Naive thymus-derived CD4-positive, alpha-beta T cell (primary cell): ENCODE measurements at regions of chr6 and their contacts with region 1.

Region 1: GRCh38 chr6:11824986-11825385 is 46.4 kb upstream of the ADTRP start:
- DNase-seq: peak in 1 of 9 donors; percentile 29
- ATAC-seq: peak; percentile 47
- H3K4me3 ChIP-seq: no peak overlapping the region
- H3K4me3 Mint-ChIP-seq: no peak overlapping the region
- H3K27ac ChIP-seq: no peak overlapping the region
- H3K27ac Mint-ChIP-seq: peak overlapping the region in 1 of 9 donors; percentile 65
- H3K4me1 ChIP-seq: no peaks in the 10 kb centered on the region
- H3K4me1 Mint-ChIP-seq: peaks cover 2 to 10% (median 7%) of the 10 kb centered on the region in 7 donors
- H3K27me3 ChIP-seq: no peaks in the 10 kb centered on the region
- H3K27me3 Mint-ChIP-seq: no peaks in the 10 kb centered on the region

Region 2: DNA sequence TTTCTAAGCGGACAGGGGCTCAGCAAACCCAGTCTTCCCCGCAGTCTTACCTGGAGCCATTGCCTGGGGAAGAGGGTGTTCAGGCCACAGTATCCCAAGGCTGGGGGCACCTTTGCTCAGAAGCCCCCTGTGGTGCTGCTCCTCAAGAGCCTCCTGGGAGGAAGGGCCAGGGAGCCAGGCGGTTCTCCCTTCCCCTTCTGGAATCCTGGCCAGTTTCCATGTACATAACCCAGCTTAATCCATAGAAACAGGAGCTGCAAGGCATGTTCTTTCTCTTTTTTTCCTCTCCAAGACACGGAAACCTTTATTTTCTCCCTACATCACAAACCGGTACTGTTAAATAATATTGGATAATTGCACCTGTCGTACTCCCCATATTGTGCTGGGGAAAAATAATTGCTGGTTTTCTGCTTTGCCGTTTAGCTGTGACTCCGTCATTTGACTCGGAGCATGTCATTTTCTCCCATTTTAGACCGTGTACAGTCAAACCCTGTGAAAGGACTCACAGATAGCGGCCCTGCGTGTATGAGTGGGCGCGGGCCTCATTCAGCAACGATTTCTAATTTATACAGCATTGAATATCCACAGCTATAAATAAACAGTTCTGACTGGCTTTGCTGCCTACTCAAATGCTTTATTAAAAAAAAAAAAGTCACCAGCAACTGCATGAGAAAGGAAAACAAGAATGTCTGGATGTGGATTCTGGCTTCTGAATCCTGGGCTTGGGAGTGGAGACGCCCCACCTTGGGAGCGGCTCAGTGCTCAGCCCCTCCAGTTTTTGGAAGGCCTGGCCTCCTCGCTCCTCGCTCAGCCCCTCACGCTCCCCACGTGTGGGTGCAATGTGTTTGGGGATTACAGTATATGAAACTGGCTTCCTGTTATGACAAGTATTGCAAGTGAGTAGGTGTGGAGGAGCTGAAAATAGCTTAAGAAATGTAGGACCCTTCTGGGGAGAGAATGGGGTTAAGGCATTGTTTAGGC is 113.7 kb before region 1 on chr6:
- CTCF ChIA-PET with region 1: no interaction called
- POLR2A ChIA-PET with region 1: no interaction called
- intact Hi-C with region 1: no loop called
- DNase-seq: peak in 8 of 9 donors; percentile 22 to 79 (median 38)
- ATAC-seq: peak; percentile 28
- H3K4me3 ChIP-seq: peak overlapping the region; percentile 13
- H3K4me3 Mint-ChIP-seq: peak overlapping the region; percentile 71 to 86 (median 75)
- H3K27ac ChIP-seq: peak overlapping the region; percentile 67
- H3K27ac Mint-ChIP-seq: peak overlapping the region; percentile 90 to 100 (median 97)
- H3K4me1 ChIP-seq: peaks cover 16 to 84% of the 10 kb centered on the region in 2 donors
- H3K4me1 Mint-ChIP-seq: peaks cover 55 to 92% (median 89%) of the 10 kb centered on the region in 7 donors
- H3K27me3 ChIP-seq: no peaks in the 10 kb centered on the region
- H3K27me3 Mint-ChIP-seq: no peaks in the 10 kb centered on the region

Region 3: GRCh38 chr6:12033770-12034169 is 208.8 kb after region 1 on chr6:
- CTCF ChIA-PET with region 1: interaction called, 9 read pairs
- POLR2A ChIA-PET with region 1: no interaction called
- intact Hi-C with region 1: loop called in 1 of 2 experiments (anchors 5 kb)
- DNase-seq: no peak
- ATAC-seq: no peak
- H3K4me3 ChIP-seq: no peak overlapping the region
- H3K4me3 Mint-ChIP-seq: peak overlapping the region in 4 of 10 donors; percentile 2 to 50 (median 22)
- H3K27ac ChIP-seq: no peak overlapping the region
- H3K27ac Mint-ChIP-seq: peak overlapping the region in 1 of 9 donors; percentile 74
- H3K4me1 ChIP-seq: peaks cover 0 to 26% of the 10 kb centered on the region in 2 donors
- H3K4me1 Mint-ChIP-seq: peaks cover 39 to 84% (median 73%) of the 10 kb centered on the region in 7 donors
- H3K27me3 ChIP-seq: no peaks in the 10 kb centered on the region
- H3K27me3 Mint-ChIP-seq: no peaks in the 10 kb centered on the region